OCI-LY7 (cell line): ENCODE measurements at regions of chr20 and their contacts with region 1.

Region 1: DNA sequence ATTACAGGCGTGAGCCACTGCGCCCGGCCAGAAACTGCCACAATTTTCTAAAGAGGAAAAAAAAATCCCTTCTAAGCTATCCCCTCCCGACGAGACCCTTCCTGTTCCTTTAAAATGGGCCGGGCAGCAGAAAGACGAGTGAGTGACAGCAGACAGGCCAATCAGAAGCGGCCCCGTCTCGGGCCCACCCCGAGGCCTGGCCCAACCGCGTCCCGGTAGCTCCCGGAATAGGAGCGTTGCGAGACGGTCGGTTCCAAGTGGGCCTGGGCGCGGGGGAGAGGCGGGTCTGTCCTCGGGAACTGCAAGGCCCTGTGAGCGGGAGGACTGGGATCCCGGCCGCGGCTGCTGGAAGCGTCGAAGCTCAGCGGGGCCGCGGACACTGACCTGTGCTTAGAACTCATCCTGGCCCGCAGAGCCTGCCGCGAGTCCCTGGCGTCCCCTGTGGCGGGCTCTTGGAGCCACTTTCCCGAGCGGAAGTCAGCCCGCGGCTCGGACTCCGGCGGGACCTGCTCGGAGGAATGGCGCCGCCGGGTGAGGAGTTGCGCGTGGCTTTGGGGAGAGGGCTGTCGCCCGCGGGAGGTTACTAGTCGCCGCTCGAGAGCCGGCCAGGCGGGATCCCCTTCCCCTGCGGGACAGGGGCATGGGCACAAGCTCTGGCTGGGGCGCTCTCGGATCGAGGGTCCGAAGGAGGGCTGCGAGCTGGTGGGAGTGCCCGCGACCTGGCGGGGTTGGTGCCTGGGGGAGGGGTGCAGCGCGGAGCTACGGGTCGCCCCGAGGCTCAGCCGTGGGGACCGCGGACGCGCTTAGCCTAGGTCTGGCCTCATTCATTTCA is at the starts of genes MROH8 and RPN2:
- DNase-seq: peak; percentile 97
- H3K4me3 ChIP-seq: peak within 1 kb of the TSS; percentile 88
- H3K27ac ChIP-seq: peak within 1 kb of the TSS; percentile 80
- H3K4me1 ChIP-seq: peaks cover 31% of the 10 kb centered on the region
- CTCF ChIP-seq: no peak
- total RNA-seq, gene MROH8: 1.3 and 2.7 TPM in 2 replicates
- total RNA-seq, gene RPN2: 89.5 and 110 TPM in 2 replicates

Region 2: GRCh38 chr20:36460648-36461599 is 718.1 kb before region 1 on chr20:
- CTCF ChIA-PET with region 1: no interaction called
- POLR2A ChIA-PET with region 1: no interaction called
- intact Hi-C with region 1: no loop called
- DNase-seq: peak; percentile 94
- H3K4me3 ChIP-seq: peak overlapping the region; percentile 62
- H3K27ac ChIP-seq: peak overlapping the region; percentile 50
- H3K4me1 ChIP-seq: peaks cover 41% of the 10 kb centered on the region
- CTCF ChIP-seq: no peak

Region 3: GRCh38 chr20:37095599-37096414 is 83.2 kb before region 1 on chr20 and contains the start of gene RBL1:
- CTCF ChIA-PET with region 1: no interaction called
- POLR2A ChIA-PET with region 1: interaction called, 7 read pairs
- intact Hi-C with region 1: loop called (anchors 2 kb)
- DNase-seq: peak; percentile 96
- H3K4me3 ChIP-seq: peak within 1 kb of the TSS; percentile 83
- H3K27ac ChIP-seq: peak within 1 kb of the TSS; percentile 86
- H3K4me1 ChIP-seq: peaks cover 37% of the 10 kb centered on the region
- CTCF ChIP-seq: peak; percentile 31; the same call in 1 of the 2 replicates
- total RNA-seq, gene RBL1: 48.9 and 63.0 TPM in 2 replicates

Region 4: GRCh38 chr20:37192137-37192854 is 13.2 kb after region 1 on chr20:
- CTCF ChIA-PET with region 1: interaction called, 3 read pairs
- POLR2A ChIA-PET with region 1: interaction called, 11 read pairs
- intact Hi-C with region 1: no loop called
- DNase-seq: peak; percentile 73
- H3K4me3 ChIP-seq: no peak overlapping the region
- H3K27ac ChIP-seq: no peak overlapping the region
- H3K4me1 ChIP-seq: peaks cover 28% of the 10 kb centered on the region
- CTCF ChIP-seq: peak; percentile 92

Region 5: DNA sequence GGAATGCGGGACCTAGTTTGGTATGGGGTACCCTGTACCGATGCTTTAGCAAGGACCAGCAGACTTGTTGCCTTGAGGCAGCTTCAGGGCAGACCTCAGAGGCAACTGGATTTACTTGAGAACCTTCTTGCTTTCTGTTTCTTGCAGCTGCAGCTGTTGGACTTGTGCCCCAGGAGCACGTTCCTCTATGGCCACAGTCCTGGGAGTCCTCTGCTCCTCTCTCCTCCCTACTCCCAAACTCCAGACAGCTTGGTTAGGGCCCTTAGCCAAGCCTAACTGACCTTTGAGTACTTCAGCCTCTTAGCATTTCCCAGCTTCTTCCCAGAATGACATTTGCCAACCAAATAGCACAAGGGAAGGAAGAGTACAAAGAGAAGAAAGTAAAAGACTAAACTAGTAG is 47.8 kb after region 1 on chr20:
- CTCF ChIA-PET with region 1: no interaction called
- POLR2A ChIA-PET with region 1: no interaction called
- intact Hi-C with region 1: no loop called
- DNase-seq: no peak
- H3K4me3 ChIP-seq: no peak overlapping the region
- H3K27ac ChIP-seq: no peak overlapping the region
- H3K4me1 ChIP-seq: no peaks in the 10 kb centered on the region
- CTCF ChIP-seq: no peak